PC-3 (cell line): ENCODE measurements at regions of chr1 and their contacts with region 1.

Region 1: DNA sequence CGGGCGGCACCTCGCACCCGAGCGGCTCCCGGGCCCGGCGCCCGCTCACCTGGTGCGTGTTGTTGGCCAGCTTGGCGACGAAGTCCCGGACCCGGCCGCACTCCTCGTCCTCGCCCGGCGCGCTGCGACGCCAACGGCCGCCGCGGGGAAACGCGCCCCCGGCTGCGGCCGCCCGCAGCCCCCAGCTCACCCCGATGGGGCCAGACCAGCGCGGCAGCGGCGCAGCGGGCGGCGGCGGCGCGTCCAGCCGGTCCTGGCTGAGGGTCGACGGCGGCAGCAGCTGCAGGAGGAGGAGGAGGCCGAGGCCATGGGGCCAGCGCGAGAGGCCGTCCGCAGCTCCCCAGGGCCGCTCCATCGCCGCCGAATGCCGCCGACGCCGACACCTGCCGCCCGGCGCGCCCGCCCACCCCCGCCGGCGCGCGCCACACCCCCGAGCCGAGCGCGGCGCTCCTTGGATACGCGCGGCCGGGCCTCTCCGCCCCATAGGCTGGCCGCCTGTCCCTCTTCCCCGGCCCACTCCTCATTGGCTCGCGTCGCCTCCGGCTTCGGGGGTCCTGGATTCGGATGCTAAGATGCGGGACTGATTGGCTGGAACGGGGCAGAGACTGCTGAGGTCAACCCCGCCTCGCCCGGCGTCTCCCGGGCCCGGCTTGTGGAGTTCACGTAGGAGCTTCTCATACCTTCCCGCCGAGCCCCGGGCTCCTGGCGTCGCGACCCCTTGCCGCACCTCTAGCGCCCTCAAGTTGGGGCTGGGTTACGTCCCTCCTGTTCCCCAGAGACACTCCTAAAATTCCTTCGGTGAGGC is at the start of gene SORT1:
- DNase-seq: peak; percentile 90
- ATAC-seq: peak; percentile 92
- H3K4me3 ChIP-seq: peak within 1 kb of the TSS; percentile 74
- H3K27ac ChIP-seq: no peak within 1 kb of the TSS
- H3K4me1 ChIP-seq: peaks cover 31% of the 10 kb centered on the region
- H3K27me3 ChIP-seq: no peaks in the 10 kb centered on the region
- CTCF ChIP-seq: no peak
- total RNA-seq, gene SORT1: 9.2 and 14.3 TPM in 2 replicates

Region 2: GRCh38 chr1:109099938-109100773 is 297.6 kb before region 1 on chr1:
- CTCF ChIA-PET with region 1: no interaction called
- POLR2A ChIA-PET with region 1: interaction called, 4 read pairs
- intact Hi-C with region 1: loop called (anchors 5 kb)
- DNase-seq: peak; percentile 97
- ATAC-seq: peak; percentile 91
- H3K4me3 ChIP-seq: peak overlapping the region; percentile 92
- H3K27ac ChIP-seq: peak overlapping the region; percentile 41; the same call in 1 of the 2 replicates
- H3K4me1 ChIP-seq: peaks cover 11% of the 10 kb centered on the region
- H3K27me3 ChIP-seq: no peaks in the 10 kb centered on the region
- CTCF ChIP-seq: peak; percentile 85

Region 3: GRCh38 chr1:109263597-109264398 is 133.9 kb before region 1 on chr1:
- CTCF ChIA-PET with region 1: interaction called, 6 read pairs
- POLR2A ChIA-PET with region 1: no interaction called
- intact Hi-C with region 1: loop called (anchors 1 kb)
- DNase-seq: peak; percentile 94
- ATAC-seq: peak; percentile 98
- H3K4me3 ChIP-seq: no peak overlapping the region
- H3K27ac ChIP-seq: no peak overlapping the region
- H3K4me1 ChIP-seq: peaks cover 10% of the 10 kb centered on the region
- H3K27me3 ChIP-seq: no peaks in the 10 kb centered on the region
- CTCF ChIP-seq: peak; percentile 98

Region 4: DNA sequence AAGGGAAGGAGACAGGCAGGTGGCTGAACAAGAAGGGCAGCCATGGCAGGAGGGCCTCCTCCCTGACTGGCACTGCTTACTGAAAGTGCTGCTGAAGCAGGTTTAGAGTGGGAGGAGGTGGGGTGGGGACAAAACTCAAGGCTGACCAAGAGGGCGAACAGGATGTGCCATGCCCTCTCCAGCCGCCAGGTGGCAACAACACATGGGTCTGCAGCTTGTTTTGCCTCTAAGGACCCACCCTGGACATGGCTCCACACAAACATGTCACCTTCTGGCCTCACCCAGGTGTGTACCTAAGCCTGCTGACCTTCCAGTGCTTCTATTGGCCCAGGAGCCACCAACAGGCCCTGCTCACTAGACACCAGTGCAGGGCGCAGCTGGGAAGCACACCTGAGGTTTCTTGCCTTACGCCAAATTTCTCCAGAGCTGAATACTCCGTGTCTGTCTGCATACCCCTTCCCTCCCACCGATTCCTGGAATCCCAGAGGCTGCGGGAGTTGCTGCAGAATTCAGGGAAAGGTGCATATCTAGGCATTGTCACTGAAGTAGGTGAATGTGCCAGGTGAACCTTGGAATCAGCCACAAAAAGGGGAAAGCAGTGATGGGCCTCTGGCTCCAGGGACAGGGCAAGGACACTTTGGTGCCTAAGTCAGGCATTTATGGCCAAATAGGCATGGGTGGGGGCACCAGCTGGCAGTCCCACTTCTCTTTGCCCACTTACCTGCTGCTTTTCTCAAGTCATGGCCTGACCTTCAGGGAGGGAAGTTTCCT is 120.1 kb before region 1 on chr1:
- CTCF ChIA-PET with region 1: interaction called, 6 read pairs
- POLR2A ChIA-PET with region 1: no interaction called
- intact Hi-C with region 1: loop called (anchors 1 kb)
- DNase-seq: peak; percentile 70
- ATAC-seq: peak; percentile 3; the same call in 1 of the 2 replicates
- H3K4me3 ChIP-seq: no peak overlapping the region
- H3K27ac ChIP-seq: peak overlapping the region; percentile 95
- H3K4me1 ChIP-seq: peaks cover 68% of the 10 kb centered on the region
- H3K27me3 ChIP-seq: no peaks in the 10 kb centered on the region
- CTCF ChIP-seq: peak; percentile 81

Region 5: DNA sequence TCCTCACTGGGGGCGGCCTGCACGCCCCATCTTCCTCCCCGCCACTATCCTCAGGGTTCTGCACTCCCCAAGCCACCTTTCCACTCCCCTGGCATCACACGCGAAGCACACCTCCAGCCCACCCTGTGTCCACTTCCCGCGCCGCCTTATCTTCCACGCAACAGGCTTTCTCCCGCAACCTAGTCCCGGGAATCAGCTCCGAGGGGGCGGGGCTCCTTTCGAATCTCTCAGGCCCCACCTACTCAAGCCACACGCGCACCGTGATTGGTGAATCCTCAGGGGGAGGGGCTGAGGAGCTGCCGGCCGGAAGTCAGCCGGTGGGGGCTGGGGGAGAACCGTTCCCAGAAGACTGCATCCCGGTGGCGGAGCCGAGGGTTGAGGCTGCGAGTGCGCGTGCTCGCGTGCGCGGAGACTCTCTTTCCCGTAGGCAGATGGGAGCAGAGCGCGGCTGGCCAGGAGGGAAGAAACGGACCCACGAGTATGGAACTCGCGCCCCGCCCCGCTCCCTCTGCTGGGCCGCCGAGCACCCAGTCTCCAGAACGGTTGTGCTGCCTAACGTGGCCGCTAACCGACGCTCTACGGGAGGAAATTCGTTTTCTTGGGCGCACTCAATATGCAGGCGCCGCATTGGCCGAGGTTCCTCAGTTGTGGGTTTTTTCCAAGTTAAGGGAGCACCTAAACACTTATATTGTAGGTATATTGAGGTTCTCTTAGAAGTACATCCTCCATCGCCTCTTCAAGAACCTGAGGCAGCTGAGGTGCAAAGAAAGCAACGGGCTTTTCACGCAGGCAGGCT is 114.6 kb before region 1 on chr1 and contains the start of gene PSRC1:
- CTCF ChIA-PET with region 1: interaction called, 4 read pairs
- POLR2A ChIA-PET with region 1: no interaction called
- intact Hi-C with region 1: loop called (anchors 1 kb)
- DNase-seq: peak; percentile 96
- ATAC-seq: peak; percentile 95
- H3K4me3 ChIP-seq: peak within 1 kb of the TSS; percentile 89
- H3K27ac ChIP-seq: peak within 1 kb of the TSS; percentile 70
- H3K4me1 ChIP-seq: peaks cover 23% of the 10 kb centered on the region
- H3K27me3 ChIP-seq: no peaks in the 10 kb centered on the region
- CTCF ChIP-seq: peak; percentile 46
- total RNA-seq, gene PSRC1: 33.8 and 34.5 TPM in 2 replicates

Region 6: GRCh38 chr1:109307274-109308021 is 90.3 kb before region 1 on chr1:
- CTCF ChIA-PET with region 1: no interaction called
- POLR2A ChIA-PET with region 1: no interaction called
- intact Hi-C with region 1: no loop called
- DNase-seq: no peak
- ATAC-seq: no peak; the same call in 1 of the 2 replicates
- H3K4me3 ChIP-seq: no peak overlapping the region
- H3K27ac ChIP-seq: no peak overlapping the region
- H3K4me1 ChIP-seq: no peaks in the 10 kb centered on the region
- H3K27me3 ChIP-seq: no peaks in the 10 kb centered on the region
- CTCF ChIP-seq: no peak

Region 7: GRCh38 chr1:109350655-109351054 is 47.1 kb before region 1 on chr1:
- CTCF ChIA-PET with region 1: interaction called, 9 read pairs
- POLR2A ChIA-PET with region 1: no interaction called
- intact Hi-C with region 1: loop called (anchors 5 kb)
- DNase-seq: no peak
- ATAC-seq: no peak
- H3K4me3 ChIP-seq: no peak overlapping the region
- H3K27ac ChIP-seq: no peak overlapping the region
- H3K4me1 ChIP-seq: no peaks in the 10 kb centered on the region
- H3K27me3 ChIP-seq: no peaks in the 10 kb centered on the region
- CTCF ChIP-seq: no peak

Region 8: DNA sequence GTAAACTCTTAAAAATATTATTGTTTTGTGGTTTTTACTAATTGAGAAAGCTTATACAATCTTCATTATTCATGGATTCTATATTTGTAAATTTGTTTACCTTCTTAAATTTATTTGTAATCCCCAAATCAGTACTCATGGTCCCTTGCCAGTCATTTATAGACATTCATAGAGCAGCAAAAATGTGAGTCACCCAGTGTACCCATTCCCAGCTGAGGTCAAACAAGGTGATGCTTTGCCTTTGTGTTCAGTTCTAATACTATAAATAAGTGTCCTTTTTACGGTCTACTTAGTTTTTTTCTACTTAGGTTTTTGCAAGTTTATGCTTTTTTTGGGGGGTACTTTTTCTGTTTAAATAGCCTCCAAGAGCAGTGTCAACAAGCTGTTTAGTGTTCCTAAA is 36.1 kb before region 1 on chr1:
- CTCF ChIA-PET with region 1: no interaction called
- POLR2A ChIA-PET with region 1: no interaction called
- intact Hi-C with region 1: loop called (anchors 5 kb)
- DNase-seq: peak; percentile 65
- ATAC-seq: peak; percentile 90
- H3K4me3 ChIP-seq: no peak overlapping the region
- H3K27ac ChIP-seq: no peak overlapping the region
- H3K4me1 ChIP-seq: peaks cover 14% of the 10 kb centered on the region
- H3K27me3 ChIP-seq: no peaks in the 10 kb centered on the region
- CTCF ChIP-seq: no peak

Region 9: DNA sequence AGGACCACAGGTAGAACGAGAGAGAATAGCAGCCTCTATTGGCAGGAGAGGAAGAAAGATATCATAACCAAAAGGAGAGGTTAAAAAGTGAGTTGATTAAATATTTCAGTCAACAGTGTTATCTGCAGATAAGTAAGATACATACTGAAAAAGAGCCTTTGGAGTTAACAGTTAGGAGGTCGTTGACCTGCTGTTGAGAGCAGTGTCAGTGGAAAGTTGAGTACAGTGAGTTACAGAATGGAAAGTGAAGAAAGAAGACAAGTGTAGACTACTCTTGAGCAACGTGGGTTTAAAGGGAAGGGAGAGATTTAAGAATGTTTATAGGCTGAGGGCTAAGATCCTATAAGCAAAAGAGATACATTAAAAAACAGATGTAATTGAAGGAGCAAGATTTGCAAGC is 191.4 kb after region 1 on chr1:
- CTCF ChIA-PET with region 1: no interaction called
- POLR2A ChIA-PET with region 1: no interaction called
- intact Hi-C with region 1: no loop called
- DNase-seq: no peak
- ATAC-seq: no peak
- H3K4me3 ChIP-seq: no peak overlapping the region
- H3K27ac ChIP-seq: no peak overlapping the region
- H3K4me1 ChIP-seq: no peaks in the 10 kb centered on the region
- H3K27me3 ChIP-seq: no peaks in the 10 kb centered on the region
- CTCF ChIP-seq: no peak